ENCODE measurements at regions of chr2 and their contacts with region 1.

Region 1: GRCh38 chr2:37389989-37390765 is 45.7 kb downstream of the QPCT start:
- DNase-seq: peak; percentile 76
- H3K4me3 Mint-ChIP-seq: peak overlapping the region; percentile 8
- H3K27ac Mint-ChIP-seq: no peak overlapping the region
- H3K4me1 Mint-ChIP-seq: peaks cover 5% of the 10 kb centered on the region
- H3K27me3 Mint-ChIP-seq: peaks cover 15% of the 10 kb centered on the region

Region 2: GRCh38 chr2:36277146-36277808 is 1112.9 kb before region 1 on chr2:
- intact Hi-C with region 1: no loop called
- DNase-seq: no peak
- H3K4me3 Mint-ChIP-seq: no peak overlapping the region
- H3K27ac Mint-ChIP-seq: peak overlapping the region; percentile 56
- H3K4me1 Mint-ChIP-seq: peaks cover 10% of the 10 kb centered on the region
- H3K27me3 Mint-ChIP-seq: peaks cover 2% of the 10 kb centered on the region

Region 3: GRCh38 chr2:37365669-37366068 is 24.5 kb before region 1 on chr2:
- intact Hi-C with region 1: loop called (anchors 1 kb)
- DNase-seq: no peak
- H3K4me3 Mint-ChIP-seq: no peak overlapping the region
- H3K27ac Mint-ChIP-seq: no peak overlapping the region
- H3K4me1 Mint-ChIP-seq: no peaks in the 10 kb centered on the region
- H3K27me3 Mint-ChIP-seq: peaks cover 31% of the 10 kb centered on the region

Region 4: DNA sequence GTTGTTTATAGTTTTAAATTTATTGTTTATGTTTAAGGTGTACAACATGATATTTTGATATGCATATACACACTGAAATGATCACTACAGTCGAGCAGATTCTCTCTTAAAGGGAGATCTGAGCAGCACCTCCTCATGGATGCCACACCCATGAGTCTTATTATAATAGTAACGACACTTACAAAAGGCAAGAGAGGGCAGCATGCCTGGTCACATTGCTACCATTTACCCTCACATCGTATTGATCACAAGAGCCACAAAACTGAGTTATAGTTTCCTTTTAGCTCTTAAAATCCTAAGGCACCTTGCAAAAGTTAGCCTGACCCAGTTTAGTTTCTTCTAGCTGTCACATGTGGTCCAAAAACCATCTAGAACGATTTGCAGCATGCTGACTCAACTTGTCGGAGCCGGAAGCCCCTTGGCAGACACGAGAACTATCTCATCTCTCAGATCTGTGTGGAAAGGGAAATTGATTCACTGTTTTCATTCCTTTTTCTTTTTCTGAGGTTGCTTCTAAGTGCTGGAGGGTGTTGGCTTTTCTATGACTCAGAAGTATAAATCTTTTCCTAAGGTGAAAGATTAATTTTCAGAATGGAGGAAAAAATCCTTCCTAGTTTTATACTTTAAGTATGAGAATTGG is 195.9 kb after region 1 on chr2:
- intact Hi-C with region 1: loop called (anchors 1 kb)
- DNase-seq: peak; percentile 62
- H3K4me3 Mint-ChIP-seq: peak overlapping the region; percentile 56
- H3K27ac Mint-ChIP-seq: peak overlapping the region; percentile 50
- H3K4me1 Mint-ChIP-seq: peaks cover 71% of the 10 kb centered on the region
- H3K27me3 Mint-ChIP-seq: peaks cover 2% of the 10 kb centered on the region

Region 5: GRCh38 chr2:37711308-37711731 is 321.1 kb after region 1 on chr2:
- intact Hi-C with region 1: loop called (anchors 5 kb)
- DNase-seq: peak; percentile 30
- H3K4me3 Mint-ChIP-seq: no peak overlapping the region
- H3K27ac Mint-ChIP-seq: no peak overlapping the region
- H3K4me1 Mint-ChIP-seq: peaks cover 44% of the 10 kb centered on the region
- H3K27me3 Mint-ChIP-seq: peaks cover 4% of the 10 kb centered on the region

Region 6: DNA sequence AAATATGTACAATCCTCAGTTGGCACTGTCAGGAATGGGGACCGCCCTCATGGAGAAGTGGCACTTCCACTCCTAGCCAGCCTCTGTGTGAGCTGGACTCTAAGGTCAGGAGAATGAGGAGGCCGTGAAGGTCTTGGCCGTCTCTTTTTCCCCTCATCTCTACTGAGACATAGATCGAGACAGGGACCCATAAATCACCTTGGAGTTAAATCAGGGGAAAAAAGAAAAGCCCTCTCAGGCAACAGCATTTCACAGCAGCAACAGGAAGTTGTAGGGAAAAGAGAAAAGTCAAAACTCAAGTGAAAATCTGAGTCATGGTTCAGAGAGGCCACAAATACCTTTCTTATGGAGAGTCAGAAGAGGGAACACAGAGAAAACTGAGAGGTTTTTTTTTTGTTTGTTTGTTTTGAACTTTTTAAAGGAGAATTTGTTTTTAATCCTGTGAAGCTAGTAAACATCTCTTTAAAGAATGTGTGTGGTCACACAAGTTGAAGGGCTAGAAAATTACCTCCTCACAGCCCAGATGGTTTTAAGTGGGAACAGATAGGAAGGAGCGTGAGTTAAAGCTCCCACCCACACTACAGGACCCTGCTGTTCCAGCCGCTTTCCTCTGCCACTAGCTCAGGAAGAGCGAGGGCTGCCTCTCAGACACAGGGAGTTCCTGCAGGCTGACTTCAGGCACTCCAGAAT is 716.4 kb after region 1 on chr2:
- intact Hi-C with region 1: loop called (anchors 10 kb)
- DNase-seq: no peak
- H3K4me3 Mint-ChIP-seq: peak overlapping the region; percentile 53
- H3K27ac Mint-ChIP-seq: peak overlapping the region; percentile 57
- H3K4me1 Mint-ChIP-seq: peaks cover 27% of the 10 kb centered on the region
- H3K27me3 Mint-ChIP-seq: no peaks in the 10 kb centered on the region